ENCODE measurements at regions of chr1 and their contacts with region 1.

Region 1: DNA sequence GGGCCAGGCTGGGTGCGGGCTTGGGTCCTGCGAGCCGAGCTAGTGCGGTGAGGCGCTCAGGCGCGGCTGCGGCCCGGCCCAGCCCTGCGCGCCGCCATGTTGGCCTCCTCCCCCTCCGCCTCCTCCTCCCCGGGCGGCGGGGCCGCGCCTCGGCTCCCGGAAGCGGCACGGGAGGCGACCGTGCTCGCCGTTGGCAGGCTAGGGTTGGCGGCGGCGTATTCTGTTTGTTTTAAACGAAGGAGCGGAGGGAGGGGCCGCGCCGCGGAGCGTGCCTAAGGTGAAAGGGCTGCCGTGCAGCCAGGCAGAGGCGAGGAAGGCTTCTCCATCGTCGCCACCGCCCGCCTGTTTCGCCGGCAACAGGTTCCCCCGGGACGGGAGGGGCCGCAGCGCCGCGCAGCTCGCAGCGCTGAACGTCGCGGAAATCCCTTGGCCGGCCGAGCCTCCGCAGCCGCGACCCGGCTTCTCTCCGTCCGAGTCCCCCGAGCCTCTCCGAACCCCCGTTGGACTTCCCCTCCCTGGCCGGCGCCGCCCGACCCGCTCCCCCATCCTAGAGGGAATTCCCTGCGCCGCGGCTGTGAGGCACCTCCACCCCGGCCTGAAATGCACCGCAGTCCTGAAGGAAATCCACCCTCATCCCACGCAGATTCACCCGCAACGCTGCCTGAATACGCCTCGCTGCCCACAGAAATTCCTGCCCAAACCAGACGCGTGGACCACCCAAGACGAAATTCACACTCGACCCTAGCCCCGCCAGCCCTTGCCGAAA is at the start of gene USP24:
- DNase-seq: peak; percentile 94
- ATAC-seq: peak; percentile 93
- total RNA-seq, gene USP24: 34.5 TPM

Region 2: DNA sequence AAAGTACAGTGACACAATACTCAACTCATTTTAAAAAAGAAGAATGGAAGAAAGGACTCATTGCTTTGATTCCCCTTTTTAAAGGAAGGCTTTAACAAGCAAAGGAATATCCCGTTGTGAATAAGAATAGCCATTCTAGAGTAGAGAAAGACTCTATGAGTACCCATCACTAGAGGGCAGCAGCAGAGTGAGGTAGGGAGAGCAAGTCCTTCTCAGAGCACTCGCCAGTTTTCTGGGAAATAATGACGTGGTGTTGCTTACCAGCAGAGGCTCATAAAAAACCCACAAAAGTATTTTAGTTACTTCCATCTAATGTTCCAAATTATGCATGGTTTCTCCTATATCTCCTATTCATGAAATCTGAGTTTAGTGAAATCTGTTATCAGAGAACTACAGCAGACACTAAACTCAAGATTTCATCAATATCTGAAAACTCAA is 74.9 kb before region 1 on chr1:
- intact Hi-C with region 1: loop called (anchors 5 kb)
- DNase-seq: peak; percentile 69
- ATAC-seq: peak; percentile 93

Region 3: DNA sequence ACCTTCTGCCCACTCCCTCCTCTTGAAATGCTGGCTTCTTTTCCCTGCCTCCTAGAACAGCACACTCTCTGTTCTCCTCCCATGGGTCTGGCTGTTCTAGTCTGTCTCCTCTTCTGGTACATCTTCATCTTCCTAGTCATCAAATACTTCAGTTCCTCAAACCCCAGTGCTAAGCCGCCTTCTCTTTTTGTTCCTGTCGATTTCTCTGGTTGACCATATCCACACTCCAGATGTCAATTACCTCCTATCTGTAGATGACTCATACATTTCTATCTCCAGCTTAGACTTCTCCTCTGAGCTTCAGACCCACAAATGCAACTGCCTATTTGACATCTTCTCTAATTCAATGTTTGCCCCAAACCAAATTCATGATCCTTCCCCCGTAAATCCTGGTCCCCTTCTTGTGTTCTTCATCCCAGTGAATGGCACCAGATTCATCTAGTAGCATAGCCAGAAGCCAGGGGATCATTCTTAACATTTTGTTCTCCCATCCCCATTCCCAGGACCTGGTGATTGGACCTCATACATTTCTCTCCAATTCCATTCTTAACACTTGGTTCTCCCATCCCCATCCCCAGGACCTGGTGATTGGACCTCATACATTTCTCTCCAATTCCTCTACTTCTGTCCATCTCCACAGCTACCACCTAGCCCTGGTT is 36.1 kb before region 1 on chr1:
- intact Hi-C with region 1: loop called (anchors 5 kb)
- DNase-seq: no peak
- ATAC-seq: no peak

Region 4: DNA sequence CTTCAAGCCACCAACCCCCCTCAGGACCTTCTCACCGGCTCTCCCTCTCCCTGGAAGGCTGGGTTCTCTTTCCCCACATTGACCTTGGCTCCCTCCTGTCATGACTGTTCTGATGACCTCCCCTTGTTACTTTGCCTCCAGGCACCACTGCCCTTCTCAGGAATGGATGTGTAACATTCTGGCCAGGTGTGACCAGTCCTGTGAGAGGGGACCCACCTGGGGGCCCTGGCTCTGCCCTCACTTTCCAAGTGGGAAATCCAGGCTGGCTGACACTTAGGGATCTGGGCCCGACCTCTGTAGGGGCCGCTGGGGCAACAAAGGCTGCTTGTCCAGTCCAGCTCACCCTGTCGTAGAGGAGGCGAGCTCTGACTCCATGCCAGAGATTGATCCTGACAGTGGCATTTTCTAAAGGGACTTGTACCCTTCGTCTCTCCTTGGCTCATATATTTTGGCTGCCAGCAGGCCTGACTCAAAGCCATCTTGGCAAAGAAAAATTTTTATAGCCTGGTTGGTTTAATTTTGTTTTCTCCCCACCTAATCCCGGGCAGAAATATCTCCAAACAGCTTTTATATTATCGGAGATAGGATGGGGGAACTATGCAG is 37.6 kb after region 1 on chr1:
- intact Hi-C with region 1: loop called (anchors 5 kb)
- DNase-seq: no peak
- ATAC-seq: no peak

Measured in Right ventricle myocardium inferior (tissue), 1 donor.